ENCODE measurements at regions of chr12 and their contacts with region 1.

Region 1: GRCh38 chr12:65106948-65107347 is 14.2 kb downstream of the WIF1 start:
- DNase-seq: no peak
- H3K4me3 ChIP-seq: no peak overlapping the region
- H3K27ac ChIP-seq: no peak overlapping the region
- H3K27me3 ChIP-seq: peaks cover 0 to 18% (median 0%) of the 10 kb centered on the region in 45 donors
- CTCF ChIP-seq: peak in 51 of 56 donors; percentile 14 to 61 (median 39)

Region 2: DNA sequence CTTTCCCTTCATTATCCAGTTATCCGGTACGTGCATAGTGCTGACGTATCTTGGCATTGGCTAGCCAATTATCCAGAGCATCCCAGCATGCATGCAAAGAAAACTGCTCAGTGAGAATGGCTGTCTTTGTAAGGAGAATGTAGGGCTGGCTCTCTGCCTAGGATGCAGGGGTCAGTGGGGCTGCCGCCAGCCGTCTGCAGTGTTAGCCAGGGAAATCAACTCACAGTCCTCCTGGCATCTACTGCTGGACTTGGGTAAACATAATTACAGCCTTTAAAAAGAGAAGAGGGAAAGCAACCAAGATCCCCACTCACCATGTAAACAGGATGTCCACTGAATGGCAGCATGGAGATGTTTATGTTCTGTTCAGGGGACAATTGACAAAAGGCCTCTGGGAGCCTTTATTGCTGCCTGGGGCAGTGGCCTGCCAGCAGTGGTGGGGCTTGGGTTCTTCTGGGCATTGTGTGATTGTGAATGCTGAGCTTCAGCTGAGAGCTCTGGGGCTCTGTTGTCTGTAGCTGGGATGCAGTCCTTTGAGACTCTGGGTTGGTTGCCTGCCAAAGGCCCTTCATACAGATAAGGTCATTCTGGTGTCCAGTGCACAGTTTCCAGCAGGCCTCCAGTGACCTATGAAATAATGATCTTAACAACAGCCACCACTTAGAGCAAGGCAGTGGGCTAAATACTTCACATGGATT is 160.7 kb before region 1 on chr12:
- intact Hi-C with region 1: loop called in 1 of 2 experiments (anchors 10 kb)
- DNase-seq: peak; percentile 52 to 93 (median 82)
- H3K4me3 ChIP-seq: peak overlapping the region in 2 of 59 donors; percentile 3 to 17
- H3K27ac ChIP-seq: peak overlapping the region in 51 of 59 donors; percentile 1 to 81 (median 53)
- H3K27me3 ChIP-seq: peaks cover 0 to 13% (median 0%) of the 10 kb centered on the region in 45 donors
- CTCF ChIP-seq: peak in 9 of 56 donors; percentile 4 to 39 (median 20)

Measured in dorsolateral prefrontal cortex (tissue), 120 donors.